ENCODE measurements at regions of chr1 and their contacts with region 1.

Region 1: DNA sequence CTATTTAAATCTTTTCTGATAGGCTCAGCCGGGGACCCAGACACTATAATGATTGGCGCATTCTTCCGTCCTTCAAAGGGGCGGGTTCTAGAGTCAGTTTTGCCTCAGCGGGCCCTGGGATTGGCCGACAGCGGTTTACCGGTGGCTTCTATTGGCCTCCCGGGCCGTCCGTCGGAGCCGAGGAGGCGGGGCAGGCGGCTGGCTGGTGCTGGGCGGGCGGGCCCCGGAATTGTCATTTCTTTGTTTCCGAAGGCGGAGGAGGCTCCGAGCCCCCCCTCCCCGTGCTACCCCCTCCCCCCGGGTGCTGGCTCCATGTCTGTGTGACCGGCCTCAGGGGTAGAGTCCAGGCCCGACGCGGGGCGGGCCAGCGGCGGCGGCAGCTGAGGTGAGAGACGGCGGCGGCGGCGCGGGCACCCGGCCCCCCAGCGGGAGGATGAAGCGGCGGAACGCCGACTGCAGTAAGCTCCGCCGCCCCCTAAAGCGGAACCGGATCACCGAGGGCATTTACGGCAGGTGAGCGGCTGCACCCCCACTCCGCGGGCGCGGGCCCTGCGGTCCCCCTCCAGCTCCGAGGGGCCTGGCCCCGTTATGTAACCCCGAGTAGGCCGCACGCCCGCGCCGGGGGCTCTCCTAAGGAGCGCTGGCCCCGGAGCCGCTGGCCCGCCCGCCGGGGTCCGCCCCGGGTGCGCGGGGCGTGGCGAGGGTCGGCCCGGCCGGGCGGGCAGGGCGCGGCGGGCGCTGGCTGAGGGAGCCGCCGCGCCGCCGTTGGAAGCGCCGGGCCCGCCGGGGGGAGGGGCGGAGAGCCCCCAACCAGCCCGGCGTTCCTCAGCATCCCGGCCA is at the start of gene MACO1:
- DNase-seq: peak; percentile 96
- ATAC-seq: peak; percentile 86
- H3K4me3 Mint-ChIP-seq: peak within 1 kb of the TSS; percentile 97
- H3K27ac Mint-ChIP-seq: peak within 1 kb of the TSS; percentile 99
- H3K4me1 Mint-ChIP-seq: peaks cover 50% of the 10 kb centered on the region
- H3K27me3 Mint-ChIP-seq: no peaks in the 10 kb centered on the region
- CTCF ChIP-seq: no peak
- total RNA-seq, gene MACO1: 17.1 and 19.7 TPM in 2 replicates

Region 2: GRCh38 chr1:25239681-25240541 is 191.0 kb before region 1 on chr1:
- CTCF ChIA-PET with region 1: no interaction called
- POLR2A ChIA-PET with region 1: interaction called, 10 read pairs
- intact Hi-C with region 1: no loop called
- DNase-seq: peak; percentile 79
- ATAC-seq: peak; percentile 87
- H3K4me3 Mint-ChIP-seq: peak overlapping the region; percentile 96
- H3K27ac Mint-ChIP-seq: peak overlapping the region; percentile 97
- H3K4me1 Mint-ChIP-seq: peaks cover 66% of the 10 kb centered on the region
- H3K27me3 Mint-ChIP-seq: no peaks in the 10 kb centered on the region
- CTCF ChIP-seq: no peak

Region 3: GRCh38 chr1:25338188-25338981 is 92.5 kb before region 1 on chr1 and contains the start of gene TMEM50A:
- CTCF ChIA-PET with region 1: no interaction called
- POLR2A ChIA-PET with region 1: interaction called, 3 read pairs
- intact Hi-C with region 1: loop called (anchors 2 kb)
- DNase-seq: peak; percentile 89
- ATAC-seq: peak; percentile 79
- H3K4me3 Mint-ChIP-seq: peak within 1 kb of the TSS; percentile 95
- H3K27ac Mint-ChIP-seq: peak within 1 kb of the TSS; percentile 94
- H3K4me1 Mint-ChIP-seq: peaks cover 49% of the 10 kb centered on the region
- H3K27me3 Mint-ChIP-seq: no peaks in the 10 kb centered on the region
- CTCF ChIP-seq: no peak
- total RNA-seq, gene TMEM50A: 61.0 and 63.5 TPM in 2 replicates

Region 4: GRCh38 chr1:25349606-25350005 is 81.3 kb before region 1 on chr1:
- CTCF ChIA-PET with region 1: no interaction called
- POLR2A ChIA-PET with region 1: no interaction called
- intact Hi-C with region 1: no loop called
- DNase-seq: no peak
- ATAC-seq: no peak
- H3K4me3 Mint-ChIP-seq: no peak overlapping the region
- H3K27ac Mint-ChIP-seq: no peak overlapping the region
- H3K4me1 Mint-ChIP-seq: no peaks in the 10 kb centered on the region
- H3K27me3 Mint-ChIP-seq: no peaks in the 10 kb centered on the region
- CTCF ChIP-seq: no peak

Region 5: GRCh38 chr1:25487628-25488027 is 56.7 kb after region 1 on chr1:
- CTCF ChIA-PET with region 1: interaction called, 10 read pairs
- POLR2A ChIA-PET with region 1: no interaction called
- intact Hi-C with region 1: no loop called
- DNase-seq: no peak
- ATAC-seq: no peak
- H3K4me3 Mint-ChIP-seq: no peak overlapping the region
- H3K27ac Mint-ChIP-seq: no peak overlapping the region
- H3K4me1 Mint-ChIP-seq: peaks cover 11% of the 10 kb centered on the region
- H3K27me3 Mint-ChIP-seq: no peaks in the 10 kb centered on the region
- CTCF ChIP-seq: no peak

Region 6: DNA sequence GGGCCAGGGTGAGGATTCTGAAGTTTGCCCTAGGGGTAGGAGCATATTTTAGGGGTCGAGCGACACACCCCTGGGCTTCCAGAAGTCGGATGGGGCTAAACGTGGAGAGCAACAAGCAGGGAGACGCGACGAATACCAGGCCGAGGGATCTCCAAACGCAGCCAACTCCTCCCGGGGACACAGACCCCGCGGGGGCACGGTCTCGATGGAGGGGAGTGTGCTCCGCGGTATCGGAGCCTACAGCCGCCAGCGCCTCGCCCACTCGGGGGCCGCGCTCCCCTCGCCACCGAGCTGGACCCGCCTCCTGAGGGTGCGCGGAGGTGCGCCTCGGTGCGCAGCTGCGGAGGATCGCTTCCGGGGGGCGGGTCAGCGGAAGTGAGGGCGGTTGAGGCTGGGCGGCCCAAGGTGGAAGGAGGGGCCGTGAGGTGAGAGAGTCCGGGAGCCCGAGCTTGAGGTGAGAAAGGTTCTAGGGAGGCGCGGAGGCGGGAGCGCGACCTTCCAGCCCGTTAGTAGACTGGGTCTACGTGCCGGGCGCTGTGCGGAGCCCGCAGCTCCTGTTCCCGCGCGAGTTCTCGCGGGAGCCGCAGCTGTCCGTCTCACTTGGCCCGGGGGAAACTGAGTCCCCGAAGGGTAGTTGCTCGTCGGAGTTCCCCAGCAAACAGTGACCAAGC is 388.8 kb after region 1 on chr1 and contains the start of gene MTFR1L:
- CTCF ChIA-PET with region 1: interaction called, 3 read pairs
- POLR2A ChIA-PET with region 1: interaction called, 8 read pairs
- intact Hi-C with region 1: loop called (anchors 2 kb)
- DNase-seq: peak; percentile 93
- ATAC-seq: peak; percentile 92
- H3K4me3 Mint-ChIP-seq: peak within 1 kb of the TSS; percentile 92
- H3K27ac Mint-ChIP-seq: peak within 1 kb of the TSS; percentile 90
- H3K4me1 Mint-ChIP-seq: peaks cover 27% of the 10 kb centered on the region
- H3K27me3 Mint-ChIP-seq: no peaks in the 10 kb centered on the region
- CTCF ChIP-seq: no peak
- total RNA-seq, gene MTFR1L: 34.6 and 35.3 TPM in 2 replicates